Activated CD4-positive, alpha-beta T cell treated with anti-CD3 and anti-CD28 coated beads, Interleukin-2, amount 10 ng/mL, durations not matched to agents 24 days and 14 days (primary cell): ENCODE measurements at regions of chr17 and their contacts with region 1.

Region 1: GRCh38 chr17:8057691-8058114 is 18.8 kb downstream of the ALOX15B start:
- DNase-seq: peak; percentile 84
- H3K4me3 Mint-ChIP-seq: no peak overlapping the region
- H3K27ac Mint-ChIP-seq: no peak overlapping the region
- H3K4me1 Mint-ChIP-seq: peaks cover 15% of the 10 kb centered on the region
- H3K27me3 Mint-ChIP-seq: peaks cover 55% of the 10 kb centered on the region

Region 2: DNA sequence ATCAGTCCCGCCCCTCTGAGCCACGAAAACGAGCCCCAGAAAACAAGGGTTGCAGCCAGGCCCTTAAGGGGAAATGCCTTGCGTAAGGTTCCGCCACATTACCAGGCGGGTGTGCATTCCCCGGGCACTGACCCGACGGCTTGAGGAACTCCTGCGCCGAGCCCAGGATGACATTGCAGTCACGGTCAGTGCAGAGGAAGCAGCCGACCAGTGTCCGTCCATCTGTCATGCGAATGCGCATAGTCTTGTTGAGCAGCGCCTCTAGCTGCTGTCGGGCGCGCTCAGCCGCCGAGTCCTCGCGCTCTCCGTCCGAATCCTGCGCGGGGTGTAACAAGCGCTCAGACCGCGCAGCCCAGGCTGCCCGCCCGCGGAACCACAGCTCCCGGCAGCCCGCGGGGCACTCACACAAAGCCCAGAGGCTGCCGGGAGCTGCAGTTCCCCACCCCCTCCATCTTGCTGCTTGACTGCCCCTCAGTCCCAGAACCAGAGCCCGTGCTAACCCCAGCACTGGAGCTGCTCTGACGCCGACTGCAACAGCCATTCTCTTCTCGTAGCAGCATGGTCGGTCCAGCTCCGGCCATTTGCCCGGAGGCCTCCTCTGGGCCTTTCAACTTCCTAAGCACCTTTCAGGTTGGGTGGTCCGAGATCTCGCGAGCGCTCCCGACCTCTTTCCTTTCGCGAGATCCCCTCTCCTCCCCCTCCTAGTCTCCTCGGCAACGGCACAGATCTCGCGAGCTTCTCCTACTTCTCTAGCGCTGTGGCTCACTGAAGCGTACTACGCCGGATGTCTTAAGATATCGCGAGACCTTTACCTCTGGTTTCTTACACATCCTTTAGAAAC is 200.6 kb before region 1 on chr17 and contains the start of gene NAA38:
- intact Hi-C with region 1: loop called (anchors 2 kb)
- DNase-seq: peak; percentile 98
- H3K4me3 Mint-ChIP-seq: no peak within 1 kb of the TSS
- H3K27ac Mint-ChIP-seq: no peak within 1 kb of the TSS
- H3K4me1 Mint-ChIP-seq: peaks cover 16% of the 10 kb centered on the region
- H3K27me3 Mint-ChIP-seq: no peaks in the 10 kb centered on the region
- total RNA-seq, gene NAA38: 45.2 and 47.5 TPM in 2 replicates

Region 3: GRCh38 chr17:7989781-7990655 is 67.7 kb before region 1 on chr17:
- intact Hi-C with region 1: loop called (anchors 2 kb)
- DNase-seq: peak; percentile 98
- H3K4me3 Mint-ChIP-seq: peak overlapping the region; percentile 79
- H3K27ac Mint-ChIP-seq: peak overlapping the region; percentile 87
- H3K4me1 Mint-ChIP-seq: peaks cover 19% of the 10 kb centered on the region
- H3K27me3 Mint-ChIP-seq: peaks cover 22% of the 10 kb centered on the region

Region 4: GRCh38 chr17:8073627-8074484 is 16.2 kb after region 1 on chr17:
- intact Hi-C with region 1: loop called (anchors 1 kb)
- DNase-seq: peak; percentile 95
- H3K4me3 Mint-ChIP-seq: peak overlapping the region; percentile 73
- H3K27ac Mint-ChIP-seq: no peak overlapping the region
- H3K4me1 Mint-ChIP-seq: peaks cover 18% of the 10 kb centered on the region
- H3K27me3 Mint-ChIP-seq: peaks cover 58% of the 10 kb centered on the region

Region 5: DNA sequence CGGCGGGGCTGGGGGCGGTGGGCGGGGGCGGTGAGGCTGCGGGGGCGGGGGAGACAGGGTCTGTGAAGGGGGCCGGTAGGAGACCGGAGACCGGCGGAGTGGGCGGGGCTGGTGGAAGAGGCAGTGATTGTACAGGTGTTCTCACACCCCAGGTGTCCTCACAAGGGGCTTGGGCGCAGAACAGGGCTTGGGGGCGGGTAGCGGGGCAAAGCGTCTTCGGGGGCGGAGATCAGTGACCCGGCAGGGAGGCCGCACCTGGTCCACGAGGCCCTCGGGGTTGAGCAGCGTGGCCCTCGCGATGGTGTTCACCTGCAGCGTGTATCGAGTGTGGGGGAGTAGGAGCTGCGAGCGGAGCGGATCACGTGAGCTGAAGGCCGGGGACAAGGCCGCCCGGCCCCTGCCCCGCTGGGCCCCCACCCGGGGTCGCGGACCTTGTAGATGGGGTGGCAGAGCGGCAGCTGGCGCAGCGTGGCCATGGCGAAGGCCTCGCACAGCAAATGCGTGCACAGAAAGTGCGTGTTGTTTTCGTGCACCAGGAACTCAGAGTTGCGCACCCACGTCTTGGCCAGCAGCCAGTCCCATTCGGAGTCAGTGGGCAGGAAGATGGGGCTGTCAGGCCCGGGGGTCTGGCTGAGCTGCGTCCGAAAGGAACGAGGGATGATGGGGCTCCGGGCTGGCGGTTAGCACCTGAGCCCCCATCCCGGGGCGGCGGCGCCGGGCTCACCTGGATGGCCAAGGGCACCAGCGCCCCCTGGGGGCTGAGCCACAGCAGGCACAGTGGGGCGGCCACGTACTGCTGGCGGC is 52.2 kb after region 1 on chr17:
- intact Hi-C with region 1: loop called (anchors 2 kb)
- DNase-seq: peak; percentile 94
- H3K4me3 Mint-ChIP-seq: peak overlapping the region; percentile 43
- H3K27ac Mint-ChIP-seq: no peak overlapping the region
- H3K4me1 Mint-ChIP-seq: peaks cover 6% of the 10 kb centered on the region
- H3K27me3 Mint-ChIP-seq: peaks cover 42% of the 10 kb centered on the region

Region 6: DNA sequence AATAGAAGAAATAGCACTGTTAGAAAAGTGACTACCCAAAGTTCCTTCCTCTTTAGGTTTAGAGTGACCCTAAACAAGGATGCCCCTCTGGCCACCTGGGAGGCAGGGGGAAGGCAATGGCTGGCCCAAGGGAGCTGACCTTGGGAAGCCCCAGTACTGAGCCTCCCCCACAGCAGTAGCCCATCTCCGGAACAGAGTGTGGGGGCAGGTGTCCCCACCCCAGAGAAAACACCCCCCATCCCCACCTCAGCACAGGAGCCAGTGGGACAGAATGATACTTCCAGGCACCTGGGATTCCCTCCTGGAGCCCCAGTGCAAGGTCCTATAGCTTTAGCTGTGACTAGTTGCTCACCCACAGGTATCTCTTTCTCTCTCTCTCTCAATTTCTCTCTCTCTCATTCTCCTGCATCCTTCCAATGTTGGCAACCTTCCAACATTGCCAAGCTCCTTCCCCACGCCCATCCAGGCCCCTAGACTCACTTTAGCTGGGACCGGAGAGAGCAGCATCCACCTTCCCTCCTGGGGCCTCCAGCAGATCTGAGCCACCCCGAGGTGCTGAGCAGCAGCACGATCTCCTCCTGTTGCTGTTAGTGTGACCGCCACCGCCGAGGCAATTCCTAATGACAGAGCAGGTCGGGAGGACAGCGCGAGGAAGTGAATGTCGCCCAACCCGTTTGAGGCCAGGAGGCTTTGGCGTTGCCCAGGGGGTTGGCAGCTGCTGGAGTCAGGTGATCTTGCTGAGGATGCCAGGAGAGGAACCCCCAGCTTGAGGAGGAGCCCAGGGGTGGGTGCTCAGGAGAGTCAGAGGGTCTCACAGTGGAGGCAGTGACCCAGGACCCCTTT is 339.7 kb after region 1 on chr17 and contains the start of gene RNF222:
- intact Hi-C with region 1: no loop called
- DNase-seq: no peak
- H3K4me3 Mint-ChIP-seq: no peak within 1 kb of the TSS
- H3K27ac Mint-ChIP-seq: peak within 1 kb of the TSS; percentile 21
- H3K4me1 Mint-ChIP-seq: peaks cover 9% of the 10 kb centered on the region
- H3K27me3 Mint-ChIP-seq: peaks cover 33% of the 10 kb centered on the region
- total RNA-seq, gene RNF222: not detected in 2 replicates